CD4-positive, alpha-beta memory T cell (primary cell): ENCODE measurements at regions of chr7 and their contacts with region 1.

Region 1: GRCh38 chr7:37234928-37235327 is 213.7 kb downstream of the ELMO1 start:
- DNase-seq: peak; percentile 11 to 39 (median 24)
- H3K4me3 ChIP-seq: no peak overlapping the region
- H3K4me3 Mint-ChIP-seq: no peak overlapping the region
- H3K27ac ChIP-seq: no peak overlapping the region
- H3K27ac Mint-ChIP-seq: peak overlapping the region in 3 of 7 donors; percentile 37 to 77 (median 51)
- H3K4me1 ChIP-seq: peaks cover 16% of the 10 kb centered on the region
- H3K4me1 Mint-ChIP-seq: peaks cover 23 to 33% (median 28%) of the 10 kb centered on the region in 4 donors
- H3K27me3 ChIP-seq: no peaks in the 10 kb centered on the region
- H3K27me3 Mint-ChIP-seq: no peaks in the 10 kb centered on the region

Region 2: DNA sequence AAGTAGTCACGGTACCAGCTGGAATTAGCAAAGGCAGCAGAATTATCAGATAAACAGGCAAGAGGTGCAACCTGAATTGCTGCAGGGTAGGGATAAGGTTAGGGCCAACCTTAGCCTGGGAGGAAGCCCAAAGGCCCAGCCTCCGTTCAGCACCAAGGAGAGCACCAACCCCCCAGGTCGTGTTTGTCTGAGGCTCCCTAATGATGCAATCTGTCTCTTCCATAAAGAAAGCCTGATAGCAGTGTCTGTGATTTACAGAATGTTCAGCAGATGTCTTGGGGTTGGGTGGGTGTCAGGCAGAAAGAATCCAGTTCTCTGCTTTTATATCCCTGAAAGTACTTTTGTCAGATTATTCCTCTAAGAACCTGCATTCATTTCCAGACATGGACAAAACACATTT is 182.2 kb before region 1 on chr7:
- CTCF ChIA-PET with region 1: no interaction called
- POLR2A ChIA-PET with region 1: no interaction called
- intact Hi-C with region 1: no loop called
- DNase-seq: peak in 3 of 5 donors; percentile 2 to 10 (median 8)
- H3K4me3 ChIP-seq: no peak overlapping the region
- H3K4me3 Mint-ChIP-seq: no peak overlapping the region
- H3K27ac ChIP-seq: no peak overlapping the region
- H3K27ac Mint-ChIP-seq: peak overlapping the region in 1 of 7 donors; percentile 13
- H3K4me1 ChIP-seq: no peaks in the 10 kb centered on the region
- H3K4me1 Mint-ChIP-seq: peaks cover 0 to 24% (median 9%) of the 10 kb centered on the region in 4 donors
- H3K27me3 ChIP-seq: no peaks in the 10 kb centered on the region
- H3K27me3 Mint-ChIP-seq: no peaks in the 10 kb centered on the region

Region 3: GRCh38 chr7:37109843-37110242 is 125.1 kb before region 1 on chr7:
- CTCF ChIA-PET with region 1: no interaction called
- POLR2A ChIA-PET with region 1: no interaction called
- intact Hi-C with region 1: no loop called
- DNase-seq: no peak
- H3K4me3 ChIP-seq: no peak overlapping the region
- H3K4me3 Mint-ChIP-seq: no peak overlapping the region
- H3K27ac ChIP-seq: no peak overlapping the region
- H3K27ac Mint-ChIP-seq: peak overlapping the region in 1 of 7 donors; percentile 39
- H3K4me1 ChIP-seq: no peaks in the 10 kb centered on the region
- H3K4me1 Mint-ChIP-seq: peaks cover 22 to 50% (median 33%) of the 10 kb centered on the region in 4 donors
- H3K27me3 ChIP-seq: no peaks in the 10 kb centered on the region
- H3K27me3 Mint-ChIP-seq: no peaks in the 10 kb centered on the region

Region 4: DNA sequence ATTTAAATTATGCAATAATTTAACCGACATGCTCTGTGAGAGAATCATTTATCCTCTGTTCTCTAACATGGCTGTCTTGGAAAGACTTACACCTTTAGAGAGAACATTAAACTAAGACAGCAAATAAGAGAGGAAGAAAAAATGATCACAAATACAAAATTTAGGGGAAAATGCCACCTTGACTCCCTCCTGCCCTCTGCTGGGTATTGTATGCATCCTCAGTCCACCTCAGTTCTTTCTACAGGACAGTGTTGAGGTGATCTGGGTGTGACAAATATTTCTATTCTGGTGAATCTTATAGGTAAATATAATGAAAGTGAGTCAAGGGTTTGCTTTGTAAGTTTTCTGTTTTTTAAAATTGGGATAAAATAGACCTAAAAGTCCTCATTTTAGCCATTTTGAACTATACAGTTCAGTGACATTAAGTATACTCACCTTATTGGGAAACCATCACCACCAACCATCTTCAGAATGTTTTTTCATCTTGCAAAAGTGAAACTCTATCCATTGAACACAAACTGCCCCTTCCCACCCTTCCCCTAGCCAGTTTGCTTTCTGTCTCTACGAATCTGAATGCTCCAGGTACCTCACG is 275.2 kb after region 1 on chr7:
- CTCF ChIA-PET with region 1: interaction called, 11 read pairs
- POLR2A ChIA-PET with region 1: no interaction called
- intact Hi-C with region 1: loop called (anchors 1 kb)
- DNase-seq: peak in 4 of 5 donors; percentile 17 to 33 (median 31)
- H3K4me3 ChIP-seq: no peak overlapping the region
- H3K4me3 Mint-ChIP-seq: no peak overlapping the region
- H3K27ac ChIP-seq: no peak overlapping the region
- H3K27ac Mint-ChIP-seq: no peak overlapping the region
- H3K4me1 ChIP-seq: no peaks in the 10 kb centered on the region
- H3K4me1 Mint-ChIP-seq: no peaks in the 10 kb centered on the region
- H3K27me3 ChIP-seq: no peaks in the 10 kb centered on the region
- H3K27me3 Mint-ChIP-seq: peaks cover 12 to 20% of the 10 kb centered on the region in 2 donors

Region 5: DNA sequence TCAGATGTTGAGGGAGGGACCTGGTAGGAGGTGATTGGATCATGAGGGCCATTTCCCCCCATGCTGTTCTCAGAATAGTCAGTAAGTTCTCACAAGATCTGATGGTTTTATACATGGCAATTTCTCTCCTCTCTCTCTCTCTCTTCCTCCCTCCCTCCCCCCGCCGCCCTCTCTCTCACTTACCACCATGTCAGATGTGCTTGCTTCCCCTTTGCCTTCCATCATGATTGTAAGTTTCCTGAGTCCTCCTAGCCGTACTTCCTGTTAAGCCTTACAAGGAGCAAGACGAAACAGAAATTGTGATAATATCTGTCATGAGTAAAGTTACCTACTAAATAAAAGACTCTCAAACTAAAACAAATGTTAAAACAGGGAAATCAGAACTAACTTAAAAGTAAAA is 428.8 kb after region 1 on chr7:
- CTCF ChIA-PET with region 1: no interaction called
- POLR2A ChIA-PET with region 1: no interaction called
- intact Hi-C with region 1: no loop called
- DNase-seq: no peak
- H3K4me3 ChIP-seq: no peak overlapping the region
- H3K4me3 Mint-ChIP-seq: no peak overlapping the region
- H3K27ac ChIP-seq: no peak overlapping the region
- H3K27ac Mint-ChIP-seq: no peak overlapping the region
- H3K4me1 ChIP-seq: no peaks in the 10 kb centered on the region
- H3K4me1 Mint-ChIP-seq: no peaks in the 10 kb centered on the region
- H3K27me3 ChIP-seq: no peaks in the 10 kb centered on the region
- H3K27me3 Mint-ChIP-seq: peaks cover 7 to 9% of the 10 kb centered on the region in 2 donors

Region 6: DNA sequence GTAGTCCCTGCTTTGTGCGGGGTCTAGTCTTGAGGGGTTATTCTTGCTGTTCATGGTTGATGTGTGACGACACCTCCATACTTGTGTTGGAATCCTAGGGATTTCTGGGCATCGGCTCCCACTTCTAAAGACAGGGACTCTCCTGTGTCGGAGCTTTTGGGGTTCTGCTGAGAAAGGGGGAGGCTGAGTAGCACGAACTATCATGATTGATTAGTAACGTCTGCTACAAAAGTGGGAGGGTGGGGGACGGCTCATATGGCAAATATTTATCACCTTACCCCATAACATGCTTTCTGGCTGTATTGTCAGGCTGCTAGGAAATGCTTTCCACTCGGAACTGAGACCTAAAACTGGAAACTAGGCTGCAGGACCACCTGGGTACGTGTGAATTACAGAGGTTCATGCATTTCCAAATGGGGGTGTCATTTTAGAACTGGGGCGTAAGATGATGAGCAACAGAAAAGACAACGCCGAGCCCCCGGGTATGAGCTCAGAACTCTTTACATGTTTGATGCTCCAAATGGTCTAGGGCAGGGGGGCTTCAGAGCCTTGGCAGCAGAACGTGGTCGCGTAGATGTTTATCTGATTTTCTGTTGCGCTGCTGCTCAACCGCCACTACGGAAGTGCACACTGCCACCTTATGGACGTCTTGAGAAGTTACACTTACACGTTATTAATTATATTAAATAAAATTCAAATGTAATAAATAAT is 598.3 kb after region 1 on chr7:
- CTCF ChIA-PET with region 1: no interaction called
- POLR2A ChIA-PET with region 1: no interaction called
- intact Hi-C with region 1: loop called (anchors 10 kb)
- DNase-seq: peak; percentile 19 to 40 (median 31)
- H3K4me3 ChIP-seq: peak overlapping the region; percentile 30 to 54
- H3K4me3 Mint-ChIP-seq: peak overlapping the region; percentile 81 to 89 (median 84)
- H3K27ac ChIP-seq: no peak overlapping the region
- H3K27ac Mint-ChIP-seq: peak overlapping the region in 2 of 7 donors; percentile 30 to 70
- H3K4me1 ChIP-seq: peaks cover 6% of the 10 kb centered on the region
- H3K4me1 Mint-ChIP-seq: peaks cover 2 to 6% (median 5%) of the 10 kb centered on the region in 4 donors
- H3K27me3 ChIP-seq: no peaks in the 10 kb centered on the region
- H3K27me3 Mint-ChIP-seq: peaks cover 3 to 4% of the 10 kb centered on the region in 2 donors